ENCODE measurements at regions of chr6 and their contacts with region 1.

Region 1: GRCh38 chr6:132813173-132813856 is 1.1 kb upstream of the RPS12 start:
- DNase-seq: peak; percentile 72
- H3K4me3 ChIP-seq: peak overlapping the region; percentile 72 to 97 (median 79)
- H3K27ac ChIP-seq: peak overlapping the region; percentile 84 to 86 (median 86)
- H3K4me1 ChIP-seq: peaks cover 0 to 38% (median 31%) of the 10 kb centered on the region in 4 donors
- H3K27me3 ChIP-seq: no peaks in the 10 kb centered on the region
- CTCF ChIP-seq: no peak
- EP300 ChIP-seq: no peak
- POLR2A ChIP-seq: no peak

Region 2: DNA sequence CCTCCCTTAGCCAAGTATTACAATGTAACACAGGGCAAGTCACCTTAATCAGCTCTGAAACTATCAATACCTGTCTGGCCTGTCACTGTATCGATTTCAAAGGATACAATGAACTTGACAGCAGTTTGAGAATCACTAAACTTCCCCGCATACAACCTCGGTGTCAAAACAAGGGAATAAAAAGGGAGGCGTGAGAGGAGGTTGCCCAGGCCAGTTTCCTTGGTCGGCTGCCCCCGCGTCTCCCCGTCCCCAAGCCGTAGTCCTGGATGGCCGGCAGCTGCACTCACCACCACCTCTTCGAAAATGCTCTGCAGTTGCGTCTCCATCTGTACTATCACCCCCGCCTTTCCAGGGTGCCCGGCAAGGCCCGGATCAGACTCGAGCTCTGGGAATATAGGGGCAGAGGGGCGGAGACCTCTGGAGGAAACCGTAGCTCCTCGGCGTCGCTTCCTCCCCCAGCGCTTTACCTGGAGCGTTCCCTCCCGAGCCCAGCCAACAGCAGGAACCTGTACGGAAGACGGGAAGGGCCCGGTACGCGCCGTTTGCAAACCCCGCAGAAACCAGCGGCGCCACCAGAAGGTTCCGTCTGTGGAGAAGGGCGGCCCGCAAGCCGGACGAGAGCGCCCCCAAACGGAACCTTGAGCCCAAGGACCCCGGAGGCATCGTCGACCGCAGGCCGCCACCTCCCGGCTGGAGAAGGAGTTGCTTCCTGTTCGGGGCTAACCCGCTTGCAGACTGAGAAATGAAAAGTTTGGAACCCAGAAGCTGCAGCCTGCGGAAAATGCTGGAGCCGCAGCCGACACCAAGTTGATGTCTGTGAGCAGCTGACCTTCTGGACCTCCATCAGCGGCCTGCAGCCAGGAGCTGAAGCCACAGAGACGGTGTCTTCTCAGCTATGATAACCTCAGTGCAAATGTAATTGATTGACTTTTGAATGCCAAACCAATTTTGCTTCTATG is 1185.3 kb before region 1 on chr6 and contains the start of gene MED23:
- intact Hi-C with region 1: loop called (anchors 5 kb)
- DNase-seq: peak; percentile 96
- H3K4me3 ChIP-seq: peak within 1 kb of the TSS; percentile 65 to 80 (median 72)
- H3K27ac ChIP-seq: peak within 1 kb of the TSS; percentile 74 to 81 (median 78)
- H3K4me1 ChIP-seq: peaks cover 0 to 36% (median 27%) of the 10 kb centered on the region in 4 donors
- H3K27me3 ChIP-seq: no peaks in the 10 kb centered on the region
- CTCF ChIP-seq: peak; percentile 78 to 91 (median 86)
- EP300 ChIP-seq: no peak
- POLR2A ChIP-seq: peak; percentile 30 to 61
- total RNA-seq, gene MED23: 19.0 to 29.6 (median 25.0) TPM

Region 3: DNA sequence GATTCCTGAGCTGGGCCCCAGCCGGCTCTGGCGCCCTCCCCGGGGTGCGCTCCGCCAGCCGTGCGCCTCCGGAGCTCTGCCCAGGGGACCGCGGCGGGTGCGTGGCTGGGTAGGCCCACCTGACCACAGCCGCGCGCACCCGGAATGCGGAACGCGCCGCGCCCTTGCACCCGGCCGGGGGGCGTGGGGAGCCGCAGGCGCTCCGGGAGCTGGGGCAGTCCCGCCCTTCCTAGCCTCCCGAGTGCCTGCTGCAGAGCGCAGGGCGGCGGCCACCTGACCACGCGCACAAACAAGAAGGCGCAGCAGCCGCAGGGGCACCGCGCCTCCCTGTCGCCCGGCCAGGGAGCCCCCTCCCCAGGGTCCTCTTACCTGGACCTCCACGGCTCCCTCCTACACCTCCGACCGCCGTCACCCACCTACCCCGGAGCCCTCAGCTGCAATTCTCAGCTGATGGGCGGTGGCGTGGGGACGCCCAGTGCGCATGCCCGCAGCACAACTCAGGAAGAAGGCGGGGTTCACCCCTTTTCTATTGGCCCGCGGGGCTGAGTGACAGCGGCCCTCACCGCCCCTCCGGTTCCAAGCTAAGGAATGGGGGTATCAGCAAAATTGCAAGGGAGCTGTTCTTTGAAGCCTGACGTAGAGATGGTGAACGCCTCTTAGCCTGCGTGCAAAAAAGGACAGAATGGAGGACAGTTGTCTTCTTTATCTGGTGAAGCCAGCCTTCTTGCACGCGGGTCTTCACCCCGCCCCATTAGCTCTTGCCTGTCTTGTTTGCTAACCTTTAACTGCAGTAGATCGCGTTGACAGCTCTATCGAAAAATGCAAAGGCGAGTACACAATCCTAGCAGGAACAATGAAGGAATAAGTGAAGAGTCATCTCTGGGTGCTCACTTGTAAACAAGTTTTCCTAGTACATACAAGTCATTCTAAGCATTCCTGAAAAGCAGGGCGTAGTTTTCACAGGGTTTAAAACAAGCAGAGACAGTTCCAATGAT is 300.4 kb before region 1 on chr6 and contains the start of gene STX7:
- intact Hi-C with region 1: loop called (anchors 5 kb)
- DNase-seq: peak; percentile 94
- H3K4me3 ChIP-seq: peak within 1 kb of the TSS; percentile 69 to 90 (median 78)
- H3K27ac ChIP-seq: peak within 1 kb of the TSS; percentile 82 to 90 (median 86)
- H3K4me1 ChIP-seq: peaks cover 0 to 39% (median 25%) of the 10 kb centered on the region in 4 donors
- H3K27me3 ChIP-seq: no peaks in the 10 kb centered on the region
- CTCF ChIP-seq: no peak
- EP300 ChIP-seq: no peak
- POLR2A ChIP-seq: peak; percentile 46 to 75
- total RNA-seq, gene STX7: 44.6 to 72.5 (median 55.1) TPM

Region 4: GRCh38 chr6:132798869-132799538 is 14.3 kb before region 1 on chr6:
- intact Hi-C with region 1: loop called (anchors 2 kb)
- DNase-seq: peak; percentile 75
- H3K4me3 ChIP-seq: peak overlapping the region; percentile 65 to 81 (median 77)
- H3K27ac ChIP-seq: peak overlapping the region in 1 of 4 donors; percentile 79
- H3K4me1 ChIP-seq: peaks cover 0 to 10% (median 8%) of the 10 kb centered on the region in 4 donors
- H3K27me3 ChIP-seq: no peaks in the 10 kb centered on the region
- CTCF ChIP-seq: peak in 3 of 4 experiments; percentile 34 to 59 (median 53)
- EP300 ChIP-seq: no peak
- POLR2A ChIP-seq: no peak

Measured in sigmoid colon (tissue), 7 donors.